Activated T-helper 1 cell treated with anti-CD3 and anti-CD28 coated beads, Interleukin-12 subunit alpha, Interleukin-12 subunit beta, Interleukin-2, Interleukin-4 antibody, amounts not matched to agents 30 ng/mL and 10 ng/mL and 1 ng/mL, durations not matched to agents 14 hours and 24 hours and 36 hours (primary cell): ENCODE measurements at regions of chr1 and their contacts with region 1.

Region 1: GRCh38 chr1:235011599-235012435 is 116.8 kb downstream of the TOMM20 start:
- DNase-seq: peak; percentile 97
- H3K4me3 Mint-ChIP-seq: peak overlapping the region; percentile 40
- H3K27ac Mint-ChIP-seq: peak overlapping the region; percentile 95
- H3K4me1 Mint-ChIP-seq: peaks cover 88% of the 10 kb centered on the region
- H3K27me3 Mint-ChIP-seq: peaks cover 5% of the 10 kb centered on the region

Region 2: GRCh38 chr1:234599617-234600417 is 412.0 kb before region 1 on chr1:
- intact Hi-C with region 1: loop called (anchors 1 kb)
- DNase-seq: peak; percentile 69
- H3K4me3 Mint-ChIP-seq: peak overlapping the region; percentile 88
- H3K27ac Mint-ChIP-seq: peak overlapping the region; percentile 96
- H3K4me1 Mint-ChIP-seq: peaks cover 56% of the 10 kb centered on the region
- H3K27me3 Mint-ChIP-seq: no peaks in the 10 kb centered on the region

Region 3: GRCh38 chr1:234842726-234843641 is 168.8 kb before region 1 on chr1:
- intact Hi-C with region 1: loop called (anchors 1 kb)
- DNase-seq: peak; percentile 67
- H3K4me3 Mint-ChIP-seq: peak overlapping the region; percentile 54
- H3K27ac Mint-ChIP-seq: peak overlapping the region; percentile 90
- H3K4me1 Mint-ChIP-seq: peaks cover 96% of the 10 kb centered on the region
- H3K27me3 Mint-ChIP-seq: peaks cover 3% of the 10 kb centered on the region

Region 4: DNA sequence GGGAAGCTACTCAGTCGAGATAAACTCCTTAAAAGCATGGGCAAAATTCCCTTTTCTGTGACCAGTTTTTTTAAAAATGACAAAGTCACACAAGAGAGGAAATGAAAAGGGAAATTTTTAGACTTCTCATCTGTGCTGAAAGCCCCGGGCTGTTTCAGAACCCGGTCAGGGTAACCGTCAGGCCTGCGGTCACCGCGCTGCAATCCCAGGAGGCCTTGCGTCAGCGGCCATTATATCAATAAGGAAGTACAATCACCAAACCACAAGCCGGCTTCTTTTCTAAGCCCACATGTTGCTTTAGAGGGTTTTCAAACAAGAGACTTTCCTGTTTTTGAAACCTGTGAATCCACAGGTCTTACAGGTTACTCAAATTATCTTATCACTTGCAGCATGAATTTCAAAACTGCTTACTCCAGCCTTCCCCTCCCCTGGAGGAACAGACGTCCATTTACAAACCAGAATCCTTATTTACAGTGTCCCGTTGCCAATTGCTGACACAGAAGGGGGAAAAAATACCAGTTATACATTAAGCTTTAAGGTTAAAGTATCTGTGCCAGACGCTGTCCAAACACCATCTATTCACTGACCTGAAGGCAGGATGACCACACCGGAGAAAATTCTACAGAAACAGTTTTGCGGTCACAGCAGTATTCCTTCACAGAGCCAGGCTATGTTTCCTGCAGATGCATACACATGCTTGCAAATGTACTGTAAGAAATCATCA is 48.5 kb before region 1 on chr1:
- intact Hi-C with region 1: loop called (anchors 1 kb)
- DNase-seq: peak; percentile 87
- H3K4me3 Mint-ChIP-seq: peak overlapping the region; percentile 73
- H3K27ac Mint-ChIP-seq: peak overlapping the region; percentile 93
- H3K4me1 Mint-ChIP-seq: peaks cover 76% of the 10 kb centered on the region
- H3K27me3 Mint-ChIP-seq: no peaks in the 10 kb centered on the region

Region 5: DNA sequence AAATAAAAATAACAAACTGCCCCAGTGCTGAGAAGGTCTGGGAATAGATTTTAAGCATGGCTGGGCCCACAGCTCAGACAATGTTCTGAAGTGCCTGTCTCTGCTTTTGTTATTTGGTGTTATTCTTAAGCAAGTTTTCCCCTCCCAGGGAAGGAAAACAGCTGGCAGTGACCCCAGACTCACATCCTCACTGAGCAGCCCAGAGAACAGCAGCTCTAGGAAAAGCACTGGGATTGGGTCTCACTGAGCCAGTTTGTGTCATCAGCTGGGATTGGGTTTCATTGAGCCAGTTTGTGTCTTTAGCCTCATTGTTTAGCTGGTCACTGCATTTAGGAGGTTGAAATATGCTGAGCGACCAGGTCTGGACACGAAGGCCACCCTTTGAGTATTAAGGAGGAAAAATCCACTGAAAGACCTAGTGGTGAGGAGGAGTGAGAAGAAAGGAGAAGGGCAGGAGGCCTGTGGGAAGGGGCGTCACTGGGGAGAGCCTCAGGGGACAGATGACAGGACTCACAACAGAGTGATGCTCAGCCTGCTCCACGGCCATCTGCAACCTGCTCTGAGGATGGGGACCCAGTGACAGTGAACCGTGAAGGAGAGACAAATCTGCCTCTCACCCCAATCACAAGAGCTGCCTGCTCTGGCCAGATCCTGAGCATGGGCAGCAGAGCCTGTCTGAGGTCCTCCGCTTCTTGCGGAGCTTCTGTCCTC is 13.0 kb after region 1 on chr1:
- intact Hi-C with region 1: loop called (anchors 1 kb)
- DNase-seq: no peak
- H3K4me3 Mint-ChIP-seq: no peak overlapping the region
- H3K27ac Mint-ChIP-seq: peak overlapping the region; percentile 30
- H3K4me1 Mint-ChIP-seq: peaks cover 48% of the 10 kb centered on the region
- H3K27me3 Mint-ChIP-seq: no peaks in the 10 kb centered on the region

Region 6: DNA sequence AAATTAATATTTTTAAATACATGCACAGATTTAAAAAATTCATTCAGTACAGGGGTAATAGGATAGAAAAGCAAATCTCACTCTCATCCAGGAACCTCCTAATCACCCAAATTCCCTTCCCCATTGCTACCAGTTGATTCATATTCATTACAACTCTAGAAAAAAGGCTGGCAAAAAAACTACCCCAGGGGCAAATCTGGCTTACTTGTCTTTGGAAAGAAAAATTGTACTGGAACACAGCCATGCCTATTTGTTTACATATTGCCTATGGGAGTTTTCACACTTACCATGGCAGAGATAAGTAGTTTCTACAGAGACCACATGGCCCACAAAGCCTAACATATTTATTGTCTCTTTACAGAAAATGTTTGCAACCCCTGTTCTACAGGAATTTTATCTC is 158.2 kb after region 1 on chr1:
- intact Hi-C with region 1: no loop called
- DNase-seq: no peak
- H3K4me3 Mint-ChIP-seq: no peak overlapping the region
- H3K27ac Mint-ChIP-seq: no peak overlapping the region
- H3K4me1 Mint-ChIP-seq: no peaks in the 10 kb centered on the region
- H3K27me3 Mint-ChIP-seq: no peaks in the 10 kb centered on the region